WTC11 (cell line): ENCODE measurements at regions of chr10 and their contacts with region 1.

Region 1: DNA sequence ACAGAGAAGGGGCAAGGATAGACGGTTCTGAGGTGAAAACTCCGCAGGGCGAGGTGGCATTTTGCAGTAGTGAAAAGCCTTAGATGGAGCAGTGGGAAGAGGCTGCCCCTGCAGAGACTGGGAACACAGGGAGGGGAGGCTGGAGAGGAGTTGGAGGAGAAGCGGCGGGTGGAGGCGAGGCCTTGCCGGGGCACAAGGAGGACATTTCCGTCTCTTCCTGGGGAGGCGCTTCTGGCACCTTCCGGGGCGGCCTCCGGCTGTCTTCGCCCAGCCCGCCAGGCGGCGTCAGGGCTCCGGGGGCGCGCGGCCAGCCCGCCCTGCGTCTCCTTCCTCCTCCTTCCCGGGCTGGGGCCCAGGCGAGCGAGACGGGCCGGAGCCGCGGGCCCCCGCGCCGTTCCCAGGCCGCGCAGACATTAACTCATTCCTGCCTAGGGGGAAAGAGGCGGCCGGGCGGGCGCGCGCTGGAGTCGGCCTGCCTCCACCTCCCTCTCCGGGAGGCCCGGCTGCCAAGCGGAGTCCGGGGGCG is 42.7 kb downstream of the LDB3 start:
- DNase-seq: peak; percentile 88
- ATAC-seq: peak; percentile 81
- H3K4me3 Mint-ChIP-seq: peak overlapping the region; percentile 62
- H3K27ac Mint-ChIP-seq: peak overlapping the region; percentile 80
- H3K4me1 Mint-ChIP-seq: peaks cover 58% of the 10 kb centered on the region
- H3K27me3 Mint-ChIP-seq: peaks cover 4% of the 10 kb centered on the region; the same call in 1 of the 2 replicates
- CTCF ChIP-seq: peak; percentile 65

Region 2: GRCh38 chr10:86545101-86545500 is 165.9 kb before region 1 on chr10:
- CTCF ChIA-PET with region 1: no interaction called
- POLR2A ChIA-PET with region 1: no interaction called
- DNase-seq: no peak
- ATAC-seq: no peak
- H3K4me3 Mint-ChIP-seq: no peak overlapping the region
- H3K27ac Mint-ChIP-seq: no peak overlapping the region
- H3K4me1 Mint-ChIP-seq: no peaks in the 10 kb centered on the region
- H3K27me3 Mint-ChIP-seq: no peaks in the 10 kb centered on the region; the same call in 1 of the 2 replicates
- CTCF ChIP-seq: no peak

Region 3: GRCh38 chr10:86671985-86672710 is 38.9 kb before region 1 on chr10:
- CTCF ChIA-PET with region 1: no interaction called
- POLR2A ChIA-PET with region 1: no interaction called
- DNase-seq: no peak
- ATAC-seq: peak; percentile 33
- H3K4me3 Mint-ChIP-seq: no peak overlapping the region
- H3K27ac Mint-ChIP-seq: peak overlapping the region; percentile 76
- H3K4me1 Mint-ChIP-seq: peaks cover 49% of the 10 kb centered on the region
- H3K27me3 Mint-ChIP-seq: no peaks in the 10 kb centered on the region
- CTCF ChIP-seq: no peak

Region 4: GRCh38 chr10:86693721-86694369 is 17.2 kb before region 1 on chr10:
- CTCF ChIA-PET with region 1: interaction called, 15 read pairs
- POLR2A ChIA-PET with region 1: no interaction called
- DNase-seq: peak; percentile 64
- ATAC-seq: peak; percentile 68
- H3K4me3 Mint-ChIP-seq: no peak overlapping the region
- H3K27ac Mint-ChIP-seq: no peak overlapping the region; the same call in 1 of the 2 replicates
- H3K4me1 Mint-ChIP-seq: peaks cover 38% of the 10 kb centered on the region
- H3K27me3 Mint-ChIP-seq: peaks cover 6% of the 10 kb centered on the region; the same call in 1 of the 2 replicates
- CTCF ChIP-seq: no peak; the same call in 1 of the 2 replicates

Region 5: DNA sequence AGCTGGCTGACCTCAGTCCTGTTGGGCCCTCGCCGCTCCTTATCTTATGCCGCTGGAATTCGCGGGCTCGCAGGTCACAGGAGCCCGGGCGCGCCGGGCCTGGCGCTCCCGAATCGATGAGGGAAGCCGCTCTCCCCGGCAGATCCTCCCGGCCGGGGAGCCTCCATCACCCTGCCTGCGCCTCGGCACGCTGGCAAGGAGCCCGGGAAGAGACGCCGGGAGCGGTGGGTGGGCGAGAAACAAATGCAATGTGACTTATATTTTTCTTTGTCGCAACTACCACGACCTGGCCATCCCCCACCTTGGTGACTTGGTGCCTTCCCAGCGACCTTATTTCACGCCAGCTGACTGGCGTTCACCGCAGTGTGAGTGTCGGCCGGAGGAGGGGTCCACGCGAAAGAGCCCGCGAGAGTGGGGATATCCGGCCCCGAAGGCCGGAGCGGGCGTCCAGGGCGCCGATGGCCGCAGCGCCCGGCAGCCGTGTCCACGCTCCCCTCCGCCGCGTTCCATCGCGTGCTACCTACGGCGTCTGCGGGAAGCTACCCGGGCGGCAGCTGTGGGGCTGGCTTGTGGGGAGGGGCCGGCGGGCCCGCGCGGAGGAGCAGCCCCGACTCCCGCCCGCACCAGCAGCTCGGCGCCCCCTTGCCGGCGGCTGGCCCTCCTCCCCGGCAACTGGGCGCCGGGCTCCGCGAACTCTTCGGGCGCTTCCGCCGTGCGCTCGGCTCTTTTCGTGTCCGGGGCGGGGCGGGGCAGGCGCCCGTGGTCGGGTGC is 44.9 kb after region 1 on chr10:
- CTCF ChIA-PET with region 1: interaction called, 11 read pairs
- POLR2A ChIA-PET with region 1: interaction called, 7 read pairs
- DNase-seq: peak; percentile 72
- ATAC-seq: peak; percentile 89
- H3K4me3 Mint-ChIP-seq: peak overlapping the region; percentile 79
- H3K27ac Mint-ChIP-seq: peak overlapping the region; percentile 29; the same call in 1 of the 2 replicates
- H3K4me1 Mint-ChIP-seq: peaks cover 51% of the 10 kb centered on the region
- H3K27me3 Mint-ChIP-seq: no peaks in the 10 kb centered on the region
- CTCF ChIP-seq: no peak

Region 6: GRCh38 chr10:86899670-86900276 is 188.7 kb after region 1 on chr10:
- CTCF ChIA-PET with region 1: interaction called, 14 read pairs
- POLR2A ChIA-PET with region 1: no interaction called
- DNase-seq: peak; percentile 56
- ATAC-seq: peak; percentile 64
- H3K4me3 Mint-ChIP-seq: no peak overlapping the region
- H3K27ac Mint-ChIP-seq: peak overlapping the region; percentile 85; the same call in 1 of the 2 replicates
- H3K4me1 Mint-ChIP-seq: peaks cover 23% of the 10 kb centered on the region
- H3K27me3 Mint-ChIP-seq: no peaks in the 10 kb centered on the region
- CTCF ChIP-seq: peak; percentile 42; the same call in 1 of the 2 replicates